Spleen (tissue), 13 donors: ENCODE measurements at regions of chr15 and their contacts with region 1.

Region 1: DNA sequence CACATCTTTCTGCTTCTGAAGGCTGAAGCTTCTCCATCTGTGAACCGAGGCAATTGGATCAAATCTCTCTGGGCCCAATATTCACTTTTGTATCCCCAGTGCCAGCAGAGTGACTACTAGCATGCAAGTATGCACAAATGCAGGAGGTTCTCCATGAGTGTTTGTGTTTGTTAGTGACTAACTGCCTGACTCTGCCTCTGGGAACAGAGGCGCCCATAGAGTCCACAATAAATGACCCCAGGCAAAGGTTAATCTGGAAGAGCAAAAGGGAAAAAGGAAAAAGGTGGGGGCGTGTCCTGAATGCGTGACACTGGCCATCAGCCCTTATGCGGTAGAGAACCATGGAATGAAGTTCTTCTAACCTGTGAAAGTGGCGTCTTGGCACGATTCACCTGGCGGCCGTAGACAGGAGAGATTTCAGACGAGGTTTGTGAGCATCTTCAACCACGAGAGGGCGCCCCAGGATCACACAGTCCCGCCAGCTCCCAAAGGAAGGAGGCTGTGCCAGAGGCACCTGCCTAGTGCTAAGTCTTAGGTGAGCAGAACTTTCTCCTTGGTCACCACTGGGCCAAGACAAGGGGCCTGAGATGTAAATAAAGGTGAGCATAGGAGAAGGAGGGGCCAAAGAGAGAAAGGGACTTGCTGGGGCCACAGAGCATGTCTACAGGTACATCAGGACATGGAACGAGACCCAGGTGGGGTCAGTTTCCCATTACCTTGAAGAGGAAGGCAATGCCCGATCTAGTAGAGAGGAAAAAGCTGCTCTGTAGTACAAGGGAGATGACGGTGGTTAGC is 44.2 kb downstream of the RBPMS2 start:
- DNase-seq: peak; percentile 95
- H3K4me3 ChIP-seq: no peak overlapping the region
- H3K27ac ChIP-seq: no peak overlapping the region
- H3K4me1 ChIP-seq: peaks cover 0 to 27% (median 13%) of the 10 kb centered on the region in 6 donors
- H3K27me3 ChIP-seq: peaks cover 0 to 7% (median 0%) of the 10 kb centered on the region in 7 donors
- CTCF ChIP-seq: peak; percentile 79 to 94 (median 88)
- POLR2A ChIP-seq: no peak

Region 2: GRCh38 chr15:64686216-64686631 is 45.0 kb before region 1 on chr15:
- intact Hi-C with region 1: loop called (anchors 5 kb)
- DNase-seq: peak; percentile 55
- H3K4me3 ChIP-seq: no peak overlapping the region
- H3K27ac ChIP-seq: peak overlapping the region in 2 of 8 donors; percentile 34 to 43
- H3K4me1 ChIP-seq: peaks cover 0 to 96% (median 36%) of the 10 kb centered on the region in 6 donors
- H3K27me3 ChIP-seq: no peaks in the 10 kb centered on the region
- CTCF ChIP-seq: peak; percentile 54 to 80 (median 73)
- POLR2A ChIP-seq: no peak

Region 3: GRCh38 chr15:64809649-64810496 is 78.7 kb after region 1 on chr15:
- intact Hi-C with region 1: loop called (anchors 2 kb)
- DNase-seq: peak; percentile 90
- H3K4me3 ChIP-seq: no peak overlapping the region
- H3K27ac ChIP-seq: no peak overlapping the region
- H3K4me1 ChIP-seq: peaks cover 0 to 17% (median 6%) of the 10 kb centered on the region in 6 donors
- H3K27me3 ChIP-seq: no peaks in the 10 kb centered on the region
- CTCF ChIP-seq: peak; percentile 78 to 97 (median 90)
- POLR2A ChIP-seq: no peak

Region 4: DNA sequence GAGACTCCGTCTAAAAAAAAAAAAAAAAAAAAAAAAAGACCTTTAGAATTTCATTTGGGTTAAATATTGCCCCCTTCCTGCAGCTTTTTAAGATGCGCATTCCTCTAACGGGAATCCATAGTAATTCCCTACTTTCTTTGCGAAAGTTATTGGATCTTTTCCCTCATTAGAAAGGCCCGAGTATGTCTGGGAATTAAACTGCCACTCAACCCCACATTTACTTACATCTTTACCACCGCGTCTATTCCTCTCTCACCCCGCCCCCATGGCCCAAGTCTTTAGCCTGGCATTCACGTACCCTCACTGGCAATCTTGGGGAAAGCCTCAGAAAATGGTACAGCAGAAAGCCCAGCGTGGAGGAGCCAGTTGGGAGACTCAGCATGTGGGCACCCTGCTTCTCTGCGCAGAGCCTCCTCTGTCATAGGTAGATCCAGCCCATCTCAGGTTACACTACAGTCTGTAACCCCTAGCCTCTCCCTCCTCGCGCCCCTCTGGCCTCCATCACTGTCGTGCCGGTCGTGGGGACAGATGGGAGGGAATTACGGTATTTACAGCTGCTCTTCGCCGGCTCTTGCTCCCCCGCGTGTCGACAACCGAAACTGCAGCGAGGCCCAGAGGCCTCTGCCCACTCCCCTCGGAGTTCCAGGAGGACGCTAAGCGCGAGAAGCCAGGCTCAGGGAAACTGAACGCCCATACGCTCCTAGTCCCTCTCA is 174.1 kb after region 1 on chr15:
- intact Hi-C with region 1: loop called (anchors 10 kb)
- DNase-seq: peak; percentile 94
- H3K4me3 ChIP-seq: peak overlapping the region in 6 of 8 donors; percentile 8 to 63 (median 26)
- H3K27ac ChIP-seq: peak overlapping the region in 7 of 8 donors; percentile 10 to 99 (median 52)
- H3K4me1 ChIP-seq: peaks cover 12 to 50% (median 38%) of the 10 kb centered on the region in 6 donors
- H3K27me3 ChIP-seq: peaks cover 0 to 10% (median 0%) of the 10 kb centered on the region in 7 donors
- CTCF ChIP-seq: peak; percentile 91 to 98 (median 96)
- POLR2A ChIP-seq: no peak